Activated naive CD4-positive, alpha-beta T cell treated with anti-CD3 and anti-CD28 coated beads for 36 hours (primary cell): ENCODE measurements at regions of chr5 and their contacts with region 1.

Region 1: GRCh38 chr5:138331449-138332368 is at the start of gene CDC25C:
- DNase-seq: peak; percentile 99
- H3K4me3 Mint-ChIP-seq: peak within 1 kb of the TSS; percentile 81
- H3K27ac Mint-ChIP-seq: peak within 1 kb of the TSS; percentile 83
- H3K4me1 Mint-ChIP-seq: peaks cover 9% of the 10 kb centered on the region
- H3K27me3 Mint-ChIP-seq: no peaks in the 10 kb centered on the region
- total RNA-seq, gene CDC25C: 23.2 to 26.6 TPM

Region 2: DNA sequence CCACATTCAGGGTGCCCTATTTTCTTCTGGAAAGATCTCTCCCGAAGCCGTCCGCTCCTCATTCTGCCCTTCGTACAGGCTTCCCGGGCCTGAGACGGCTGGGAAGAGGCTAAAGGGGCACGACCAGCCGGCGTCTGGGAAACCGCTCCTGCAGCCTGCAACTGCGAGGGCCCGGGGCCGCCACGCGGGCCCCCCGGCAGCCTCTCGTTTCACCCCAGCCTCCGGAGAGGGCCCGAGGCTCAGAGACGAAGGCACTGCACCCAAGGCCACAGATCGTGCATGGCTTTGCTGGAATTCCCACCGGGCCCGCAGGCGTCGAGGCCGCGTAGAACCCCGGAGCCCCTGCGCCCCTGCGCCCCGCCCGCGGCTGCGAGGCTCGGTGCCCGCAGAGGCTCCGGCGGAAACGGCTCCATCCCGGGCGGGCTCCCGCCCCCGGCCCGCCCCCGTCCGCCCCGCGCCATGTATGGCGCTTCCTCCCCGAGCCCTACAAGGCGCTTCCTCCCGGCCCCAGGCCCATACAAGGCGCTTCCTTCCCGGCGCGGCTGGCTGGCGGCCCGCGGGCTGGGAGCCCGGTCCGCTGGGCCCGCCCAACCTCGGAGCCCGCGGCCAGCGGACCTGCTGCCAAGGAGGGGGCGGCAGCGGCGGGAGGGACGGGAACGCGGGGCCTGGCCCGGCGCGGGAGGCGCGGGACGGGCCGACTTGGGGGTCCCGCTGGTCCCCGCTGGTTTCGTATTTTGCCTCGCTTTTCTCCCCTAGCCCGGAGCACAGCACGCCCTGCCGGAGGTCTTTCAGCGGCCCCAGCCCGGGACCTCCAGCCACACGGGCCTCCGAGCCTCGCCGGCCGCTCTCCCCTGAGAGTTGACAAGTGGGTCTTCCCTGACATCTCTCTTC is 160.2 kb after region 1 on chr5:
- CTCF ChIA-PET with region 1: no interaction called
- intact Hi-C with region 1: loop called (anchors 1 kb)
- DNase-seq: peak; percentile 85
- H3K4me3 Mint-ChIP-seq: peak overlapping the region; percentile 89
- H3K27ac Mint-ChIP-seq: no peak overlapping the region
- H3K4me1 Mint-ChIP-seq: peaks cover 11% of the 10 kb centered on the region
- H3K27me3 Mint-ChIP-seq: peaks cover 11% of the 10 kb centered on the region

Region 3: DNA sequence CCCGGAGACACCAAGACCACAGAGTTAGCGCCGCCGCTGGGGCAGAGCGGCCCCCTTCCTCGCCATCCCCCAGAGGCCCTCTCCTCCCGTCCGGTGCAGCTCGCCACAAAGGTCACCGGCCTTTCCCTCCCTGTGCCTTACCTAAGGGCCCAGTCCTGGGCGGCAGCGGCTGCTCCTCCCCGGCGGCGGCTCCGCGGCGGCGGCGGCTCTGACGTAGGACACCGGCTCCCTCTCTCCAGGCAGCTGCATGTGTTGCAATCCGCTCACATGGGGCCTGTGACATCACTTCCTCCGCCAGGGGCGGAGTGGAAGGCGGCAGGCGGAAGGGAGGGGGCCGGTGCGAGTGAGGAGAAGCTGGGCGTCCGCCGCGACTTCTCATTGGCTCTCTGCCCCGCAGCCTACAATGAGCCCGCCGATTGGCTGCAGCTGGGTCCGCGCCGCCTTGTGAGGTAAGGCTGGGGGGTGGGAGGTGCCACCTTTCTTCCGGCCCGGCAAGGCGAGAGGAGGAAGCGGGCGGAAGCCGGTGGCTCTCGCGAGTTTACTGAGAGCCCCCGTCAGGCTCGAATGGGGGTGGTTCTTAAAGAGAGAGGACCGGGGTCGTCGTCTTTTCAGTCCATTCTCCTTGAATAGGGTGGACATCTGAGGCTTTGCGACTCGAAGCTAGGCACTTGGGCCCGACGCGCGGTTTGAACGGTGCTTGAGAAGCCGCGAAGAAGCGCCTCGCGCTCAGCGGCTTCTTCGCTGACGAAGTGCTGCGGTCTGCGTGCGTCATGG is 211.4 kb after region 1 on chr5 and contains the start of gene ETF1:
- CTCF ChIA-PET with region 1: no interaction called
- intact Hi-C with region 1: no loop called
- DNase-seq: peak; percentile 100
- H3K4me3 Mint-ChIP-seq: peak within 1 kb of the TSS; percentile 100
- H3K27ac Mint-ChIP-seq: peak within 1 kb of the TSS; percentile 100
- H3K4me1 Mint-ChIP-seq: peaks cover 71% of the 10 kb centered on the region
- H3K27me3 Mint-ChIP-seq: no peaks in the 10 kb centered on the region
- total RNA-seq, gene ETF1: 99.8 to 107 TPM

Region 4: GRCh38 chr5:139120521-139120920 is 788.8 kb after region 1 on chr5:
- CTCF ChIA-PET with region 1: no interaction called
- intact Hi-C with region 1: no loop called
- DNase-seq: no peak
- H3K4me3 Mint-ChIP-seq: no peak overlapping the region
- H3K27ac Mint-ChIP-seq: no peak overlapping the region
- H3K4me1 Mint-ChIP-seq: no peaks in the 10 kb centered on the region
- H3K27me3 Mint-ChIP-seq: no peaks in the 10 kb centered on the region